Heart right ventricle (tissue), 16 donors: ENCODE measurements at regions of chr4 and their contacts with region 1.

Region 1: DNA sequence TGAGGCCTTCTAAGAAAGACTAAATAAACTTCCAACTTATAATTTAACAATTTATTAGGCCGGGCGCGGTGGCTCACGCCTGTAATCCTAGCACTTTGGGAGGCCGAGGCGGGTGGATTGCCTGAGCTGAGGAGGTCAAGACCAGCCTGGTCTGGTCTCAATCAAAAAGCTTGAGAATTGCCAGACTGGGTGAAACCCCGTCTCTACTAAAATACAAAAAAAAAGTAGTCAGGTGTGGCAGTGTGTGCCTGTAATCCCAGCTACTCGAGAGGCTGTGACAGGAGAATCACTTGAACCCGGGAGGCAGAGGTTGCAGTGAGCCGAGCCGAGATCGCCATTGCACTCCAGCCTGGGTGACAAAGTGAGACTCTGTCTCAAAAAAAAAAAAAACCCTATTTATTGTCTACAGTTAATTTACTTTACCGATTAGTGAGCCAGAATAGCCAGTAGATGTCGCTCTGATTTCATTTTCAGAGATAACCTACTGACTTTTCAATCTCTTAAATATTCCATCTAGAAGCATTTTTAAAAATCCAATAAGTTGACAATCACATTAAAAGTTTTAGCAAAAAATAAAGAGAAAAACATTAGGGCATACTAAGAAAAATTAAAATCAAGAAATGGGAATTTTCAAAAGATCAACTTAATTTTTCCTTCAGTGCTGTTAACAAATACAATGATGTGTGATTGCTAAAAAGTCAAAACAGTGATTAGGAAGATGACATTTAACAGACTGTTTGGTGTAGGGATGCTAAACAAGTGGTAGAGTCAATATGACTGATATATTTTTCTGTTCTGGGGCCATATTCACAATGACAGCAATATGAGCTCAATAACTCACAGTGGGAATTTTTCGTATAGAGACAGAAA is 4.3 kb upstream of the SHROOM3 start:
- DNase-seq: no peak
- ATAC-seq: no peak
- H3K4me3 ChIP-seq: no peak overlapping the region
- H3K27ac ChIP-seq: no peak overlapping the region
- H3K4me1 ChIP-seq: peaks cover 0 to 13% (median 0%) of the 10 kb centered on the region in 9 donors
- H3K27me3 ChIP-seq: peaks cover 0 to 10% (median 5%) of the 10 kb centered on the region in 7 donors
- CTCF ChIP-seq: peak; percentile 24 to 83 (median 66)

Region 2: GRCh38 chr4:76499461-76499860 is 68.7 kb after region 1 on chr4:
- intact Hi-C with region 1: loop called (anchors 2 to 5 kb)
- DNase-seq: no peak
- ATAC-seq: no peak
- H3K4me3 ChIP-seq: no peak overlapping the region
- H3K27ac ChIP-seq: no peak overlapping the region
- H3K4me1 ChIP-seq: peaks cover 0 to 8% (median 0%) of the 10 kb centered on the region in 9 donors
- H3K27me3 ChIP-seq: peaks cover 0 to 5% (median 0%) of the 10 kb centered on the region in 7 donors
- CTCF ChIP-seq: no peak

Region 3: DNA sequence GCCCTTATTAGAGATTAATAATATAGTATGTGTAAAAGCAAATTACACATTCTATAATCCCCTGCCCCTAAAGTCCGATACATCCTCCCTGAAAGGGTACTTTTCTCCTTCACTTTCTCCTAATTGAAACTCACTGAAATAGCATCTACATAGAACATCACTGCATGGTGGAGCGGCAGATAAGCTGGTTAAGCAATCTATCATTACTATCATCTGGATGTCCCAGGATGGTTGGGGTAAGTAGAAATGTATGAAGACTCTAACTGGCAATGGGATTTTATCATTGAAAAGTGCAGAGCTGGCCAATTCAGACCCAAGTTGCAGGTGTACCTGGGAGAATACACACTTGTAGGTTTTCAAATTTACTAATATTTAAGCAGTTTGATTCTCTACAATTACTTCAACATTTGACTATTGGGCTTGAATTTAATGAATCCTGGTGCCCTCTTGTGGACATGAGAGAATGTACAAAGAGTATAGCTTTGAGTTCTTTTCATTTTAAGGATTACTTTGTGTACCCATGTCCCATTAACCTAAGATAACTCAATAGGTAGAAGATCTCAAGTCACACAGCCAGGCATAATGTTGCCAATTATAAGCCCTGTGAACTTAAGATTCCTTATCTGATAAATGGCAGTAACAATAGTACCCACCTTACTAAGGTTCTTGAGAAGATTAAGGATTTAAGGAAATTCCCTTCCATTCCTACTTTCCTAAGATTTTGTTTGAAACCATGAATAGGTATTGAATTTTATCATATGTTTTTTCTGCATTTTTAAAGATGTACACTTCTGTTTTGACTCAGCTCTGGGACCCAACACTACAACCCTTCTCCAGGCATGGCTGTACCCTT is 74.1 kb after region 1 on chr4:
- intact Hi-C with region 1: loop called in 8 of 10 experiments (anchors 2 to 5 kb)
- DNase-seq: no peak
- ATAC-seq: peak in 4 of 8 donors; percentile 33 to 63 (median 52)
- H3K4me3 ChIP-seq: no peak overlapping the region
- H3K27ac ChIP-seq: no peak overlapping the region
- H3K4me1 ChIP-seq: no peaks in the 10 kb centered on the region
- H3K27me3 ChIP-seq: peaks cover 0 to 5% (median 0%) of the 10 kb centered on the region in 7 donors
- CTCF ChIP-seq: peak; percentile 32 to 79 (median 71)

Region 4: DNA sequence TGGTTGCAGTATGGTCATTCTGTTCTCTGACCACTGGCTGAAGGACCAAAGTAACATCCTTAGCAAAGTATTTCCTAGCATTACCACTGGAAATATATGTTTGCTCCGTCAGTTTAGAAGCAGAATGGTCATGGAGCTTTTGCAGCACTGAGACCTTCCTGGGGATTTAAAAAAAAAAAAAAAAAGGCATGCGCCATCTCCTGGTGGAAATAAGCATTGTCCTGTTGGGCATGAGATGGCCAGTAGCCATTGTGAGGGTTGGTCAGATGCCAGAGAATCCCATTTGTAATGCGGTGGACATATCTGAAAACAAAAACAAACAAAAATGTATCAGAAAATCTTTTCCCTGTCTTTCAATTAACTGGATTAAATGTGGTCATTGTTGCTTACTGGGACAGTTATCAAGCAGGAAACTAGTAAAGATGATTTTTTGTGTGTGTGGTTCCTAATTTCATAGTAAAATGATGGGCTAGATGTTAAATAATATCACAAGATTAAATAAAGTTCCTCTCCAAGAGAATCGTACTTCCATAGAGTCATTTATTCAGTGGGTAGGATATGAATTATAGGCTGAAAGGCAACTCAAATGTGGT is 327.6 kb after region 1 on chr4:
- intact Hi-C with region 1: loop called in 6 of 10 experiments (anchors 5 to 10 kb)
- DNase-seq: peak in 1 of 2 donors; percentile 35
- ATAC-seq: peak in 7 of 8 donors; percentile 41 to 69 (median 57)
- H3K4me3 ChIP-seq: no peak overlapping the region
- H3K27ac ChIP-seq: peak overlapping the region in 2 of 10 donors; percentile 5 to 60
- H3K4me1 ChIP-seq: peaks cover 0 to 38% (median 20%) of the 10 kb centered on the region in 9 donors
- H3K27me3 ChIP-seq: no peaks in the 10 kb centered on the region
- CTCF ChIP-seq: peak; percentile 55 to 82 (median 77)